CD14-positive monocyte (primary cell): ENCODE measurements at regions of chr18 and their contacts with region 1.

Region 1: GRCh38 chr18:21038201-21038600 is 73.4 kb downstream of the ROCK1 start:
- DNase-seq: no peak
- H3K4me3 ChIP-seq: no peak overlapping the region
- H3K4me3 Mint-ChIP-seq: no peak overlapping the region
- H3K27ac ChIP-seq: no peak overlapping the region
- H3K27ac Mint-ChIP-seq: no peak overlapping the region
- H3K4me1 ChIP-seq: no peaks in the 10 kb centered on the region
- H3K4me1 Mint-ChIP-seq: no peaks in the 10 kb centered on the region
- H3K27me3 ChIP-seq: no peaks in the 10 kb centered on the region
- H3K27me3 Mint-ChIP-seq: no peaks in the 10 kb centered on the region
- CTCF ChIP-seq: no peak

Region 2: DNA sequence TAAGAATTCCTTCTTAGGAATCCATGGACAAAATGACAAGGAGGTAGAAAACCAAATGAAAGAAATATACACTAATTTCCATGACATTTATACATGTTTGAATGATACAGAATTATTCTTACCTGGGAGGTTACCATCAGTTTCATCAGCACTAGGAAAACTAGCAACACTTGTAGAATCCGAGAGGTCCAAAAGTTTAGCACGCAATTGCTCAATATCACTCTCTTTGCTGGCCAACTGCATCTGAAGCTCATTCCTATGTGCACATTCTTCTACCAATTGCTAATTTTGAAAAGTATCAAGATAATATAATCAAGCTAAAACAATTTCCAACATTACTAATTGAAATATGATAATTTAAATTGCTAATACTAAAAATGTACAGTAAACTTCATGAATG is 71.4 kb before region 1 on chr18:
- intact Hi-C with region 1: loop called in 1 of 2 experiments (anchors 2 kb)
- DNase-seq: no peak
- H3K4me3 ChIP-seq: no peak overlapping the region
- H3K4me3 Mint-ChIP-seq: no peak overlapping the region
- H3K27ac ChIP-seq: no peak overlapping the region
- H3K27ac Mint-ChIP-seq: no peak overlapping the region
- H3K4me1 ChIP-seq: no peaks in the 10 kb centered on the region
- H3K4me1 Mint-ChIP-seq: no peaks in the 10 kb centered on the region
- H3K27me3 ChIP-seq: no peaks in the 10 kb centered on the region
- H3K27me3 Mint-ChIP-seq: no peaks in the 10 kb centered on the region
- CTCF ChIP-seq: no peak

Region 3: GRCh38 chr18:20988726-20989125 is 49.5 kb before region 1 on chr18:
- intact Hi-C with region 1: loop called in 1 of 2 experiments (anchors 10 kb)
- DNase-seq: no peak
- H3K4me3 ChIP-seq: no peak overlapping the region
- H3K4me3 Mint-ChIP-seq: no peak overlapping the region
- H3K27ac ChIP-seq: no peak overlapping the region
- H3K27ac Mint-ChIP-seq: no peak overlapping the region
- H3K4me1 ChIP-seq: no peaks in the 10 kb centered on the region
- H3K4me1 Mint-ChIP-seq: no peaks in the 10 kb centered on the region
- H3K27me3 ChIP-seq: no peaks in the 10 kb centered on the region
- H3K27me3 Mint-ChIP-seq: no peaks in the 10 kb centered on the region
- CTCF ChIP-seq: no peak